Panc1 (cell line): ENCODE measurements at regions of chr3 and their contacts with region 1.

Region 1: GRCh38 chr3:186617038-186617946 is 4.4 kb downstream of the AHSG start:
- DNase-seq: peak; percentile 78
- ATAC-seq: peak; percentile 98
- H3K4me3 ChIP-seq: peak overlapping the region; percentile 6 to 43
- H3K27ac ChIP-seq: no peak overlapping the region
- H3K4me1 ChIP-seq: 0 out of 2 replicates have a peak, but pooled peaks cover 6% of the 10 kb centered on the region
- H3K27me3 ChIP-seq: peaks cover 12% of the 10 kb centered on the region
- CTCF ChIP-seq: peak; percentile 99

Region 2: DNA sequence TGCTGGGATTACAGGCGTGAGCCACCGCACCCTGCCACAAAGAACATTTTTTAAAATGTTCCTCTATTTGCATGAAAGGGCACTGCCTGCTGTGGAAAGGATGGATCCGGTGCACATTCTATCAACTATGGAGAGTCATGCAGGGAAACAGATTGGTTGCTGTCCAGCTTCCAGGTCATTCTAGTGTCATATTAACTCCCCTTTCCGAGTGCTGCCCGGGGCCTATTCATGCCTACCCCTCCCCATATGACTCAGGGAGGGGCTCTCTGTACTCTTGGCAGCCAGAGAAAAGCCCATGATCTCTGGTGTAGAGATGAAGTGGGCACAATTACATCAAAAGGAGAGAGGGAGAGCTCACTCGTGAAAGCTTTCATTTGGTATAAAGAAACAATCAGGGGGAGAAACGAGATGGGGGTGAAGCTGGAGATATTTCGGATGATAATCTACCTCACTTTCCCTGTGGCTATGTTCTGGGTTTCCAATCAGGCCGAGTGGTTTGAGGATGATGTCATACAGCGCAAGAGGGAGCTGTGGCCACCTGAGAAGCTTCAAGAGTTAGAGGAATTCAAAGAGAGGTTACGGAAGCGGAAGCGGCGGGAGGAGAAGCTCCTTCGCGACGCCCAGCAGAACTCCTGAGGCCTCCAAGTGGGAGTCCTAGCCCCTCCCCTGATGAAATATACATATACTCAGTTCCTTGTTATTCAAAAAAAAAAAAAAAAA is 20.6 kb before region 1 on chr3:
- CTCF ChIA-PET with region 1: interaction called, 17 read pairs
- POLR2A ChIA-PET with region 1: no interaction called
- in situ Hi-C with region 1: no loop called
- intact Hi-C with region 1: no loop called
- DNase-seq: no peak
- ATAC-seq: no peak
- H3K4me3 ChIP-seq: no peak overlapping the region; a peak in 1 of 4 replicates
- H3K27ac ChIP-seq: no peak overlapping the region
- H3K4me1 ChIP-seq: no peaks in the 10 kb centered on the region
- H3K27me3 ChIP-seq: no peaks in the 10 kb centered on the region
- CTCF ChIP-seq: no peak

Region 3: GRCh38 chr3:186754006-186754405 is 136.7 kb after region 1 on chr3:
- CTCF ChIA-PET with region 1: interaction called, 6 read pairs
- POLR2A ChIA-PET with region 1: interaction called, 3 read pairs
- in situ Hi-C with region 1: no loop called
- intact Hi-C with region 1: loop called (anchors 2 kb)
- DNase-seq: peak; percentile 18
- ATAC-seq: no peak
- H3K4me3 ChIP-seq: no peak overlapping the region
- H3K27ac ChIP-seq: no peak overlapping the region
- H3K4me1 ChIP-seq: peaks cover 3% of the 10 kb centered on the region; the same call in 1 of the 2 replicates
- H3K27me3 ChIP-seq: no peaks in the 10 kb centered on the region
- CTCF ChIP-seq: no peak

Region 4: GRCh38 chr3:186821429-186822367 is 204.4 kb after region 1 on chr3:
- CTCF ChIA-PET with region 1: interaction called, 7 read pairs
- POLR2A ChIA-PET with region 1: no interaction called
- in situ Hi-C with region 1: no loop called
- intact Hi-C with region 1: loop called (anchors 1 kb)
- DNase-seq: peak; percentile 33
- ATAC-seq: no peak
- H3K4me3 ChIP-seq: no peak overlapping the region
- H3K27ac ChIP-seq: no peak overlapping the region
- H3K4me1 ChIP-seq: 0 out of 2 replicates have a peak, but pooled peaks cover 3% of the 10 kb centered on the region
- H3K27me3 ChIP-seq: peaks cover 5% of the 10 kb centered on the region; the same call in 1 of the 2 replicates
- CTCF ChIP-seq: peak; percentile 88